Panc1 (cell line): ENCODE measurements at regions of chr9 and their contacts with region 1.

Region 1: DNA sequence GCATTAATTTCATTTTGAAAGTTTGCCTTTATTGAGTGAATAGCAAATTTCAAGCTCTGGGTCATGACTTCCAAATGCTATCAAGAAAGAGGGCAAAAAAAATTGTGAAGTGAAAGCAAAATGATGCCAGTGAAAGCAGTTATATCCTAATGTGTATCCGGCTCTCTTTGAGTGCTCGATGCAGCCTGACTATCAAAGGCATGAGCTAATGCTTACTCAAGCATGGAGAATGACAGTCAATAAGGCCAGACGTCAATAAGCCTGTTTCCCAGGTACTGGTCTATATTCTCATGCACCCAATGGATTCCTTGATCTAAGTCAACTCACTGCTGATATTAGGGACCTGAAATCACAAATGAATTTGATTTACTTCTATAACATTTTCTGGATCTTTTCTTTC is 435.5 kb downstream of the CAAP1 start:
- DNase-seq: no peak
- ATAC-seq: no peak
- H3K4me3 ChIP-seq: no peak overlapping the region
- H3K27ac ChIP-seq: no peak overlapping the region
- H3K4me1 ChIP-seq: no peaks in the 10 kb centered on the region
- H3K27me3 ChIP-seq: no peaks in the 10 kb centered on the region
- CTCF ChIP-seq: no peak

Region 2: GRCh38 chr9:24712206-24712605 is 1744.9 kb before region 1 on chr9:
- CTCF ChIA-PET with region 1: no interaction called
- POLR2A ChIA-PET with region 1: no interaction called
- in situ Hi-C with region 1: no loop called
- intact Hi-C with region 1: no loop called
- DNase-seq: no peak
- ATAC-seq: no peak
- H3K4me3 ChIP-seq: no peak overlapping the region
- H3K27ac ChIP-seq: no peak overlapping the region
- H3K4me1 ChIP-seq: no peaks in the 10 kb centered on the region
- H3K27me3 ChIP-seq: no peaks in the 10 kb centered on the region
- CTCF ChIP-seq: no peak

Region 3: DNA sequence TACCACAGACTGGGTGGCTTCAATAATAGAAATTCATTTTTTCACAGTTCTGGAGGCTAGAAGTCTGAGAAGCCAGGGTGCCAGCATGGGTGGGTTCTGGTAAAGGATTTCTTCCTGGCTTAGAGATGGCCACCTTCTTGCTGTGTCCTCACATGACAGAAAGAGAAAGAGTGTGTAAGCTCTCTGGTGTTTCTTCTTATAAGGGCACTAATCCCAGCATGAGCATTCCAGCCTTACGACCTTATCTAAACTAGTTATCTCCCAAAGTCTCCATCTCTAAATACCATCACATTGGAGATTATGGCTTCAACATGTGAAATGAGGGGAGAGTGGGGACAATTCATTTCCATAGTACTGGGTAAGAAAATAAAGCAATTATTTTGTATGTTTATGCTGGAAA is 552.5 kb before region 1 on chr9:
- CTCF ChIA-PET with region 1: no interaction called
- POLR2A ChIA-PET with region 1: no interaction called
- in situ Hi-C with region 1: no loop called
- intact Hi-C with region 1: no loop called
- DNase-seq: no peak
- ATAC-seq: no peak
- H3K4me3 ChIP-seq: no peak overlapping the region
- H3K27ac ChIP-seq: no peak overlapping the region
- H3K4me1 ChIP-seq: no peaks in the 10 kb centered on the region
- H3K27me3 ChIP-seq: no peaks in the 10 kb centered on the region
- CTCF ChIP-seq: no peak

Region 4: DNA sequence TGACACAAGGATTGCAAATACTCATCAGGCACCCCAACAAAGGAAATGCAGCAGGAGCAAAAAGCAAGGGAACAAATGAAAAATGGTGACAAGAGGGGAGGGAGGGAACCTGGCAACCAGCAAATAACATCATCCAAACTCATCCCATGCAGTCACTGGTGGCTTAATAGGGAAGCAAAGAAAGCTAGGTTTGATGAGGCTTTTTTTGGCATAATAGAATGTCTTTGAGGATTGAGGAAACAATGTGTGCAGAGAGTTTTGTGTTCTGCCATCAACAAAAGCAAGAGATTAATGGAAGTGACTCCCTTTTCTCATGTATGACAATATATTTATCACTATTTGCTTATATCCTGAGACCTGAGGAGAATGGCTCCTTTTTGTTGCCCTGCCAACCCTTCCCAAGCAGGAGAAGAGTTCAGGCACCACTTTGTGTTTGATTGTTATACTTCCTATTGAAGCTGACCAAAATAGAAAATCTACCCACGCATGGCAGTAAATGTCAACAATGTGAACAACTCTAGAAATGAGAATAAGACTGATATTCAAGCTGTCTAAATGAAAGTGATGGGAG is 59.7 kb after region 1 on chr9:
- CTCF ChIA-PET with region 1: no interaction called
- POLR2A ChIA-PET with region 1: no interaction called
- in situ Hi-C with region 1: no loop called
- intact Hi-C with region 1: loop called (anchors 10 kb)
- DNase-seq: no peak
- ATAC-seq: no peak
- H3K4me3 ChIP-seq: no peak overlapping the region
- H3K27ac ChIP-seq: no peak overlapping the region
- H3K4me1 ChIP-seq: no peaks in the 10 kb centered on the region
- H3K27me3 ChIP-seq: no peaks in the 10 kb centered on the region
- CTCF ChIP-seq: no peak